Uterus (tissue), 4 donors: ENCODE measurements at regions of chr10 and their contacts with region 1.

Region 1: GRCh38 chr10:24435374-24435773 is 226.4 kb downstream of the KIAA1217 start:
- DNase-seq: no peak
- H3K4me3 ChIP-seq: no peak overlapping the region
- H3K27ac ChIP-seq: no peak overlapping the region
- H3K4me1 ChIP-seq: no peaks in the 10 kb centered on the region
- H3K27me3 ChIP-seq: no peaks in the 10 kb centered on the region
- CTCF ChIP-seq: no peak
- POLR2A ChIP-seq: no peak

Region 2: DNA sequence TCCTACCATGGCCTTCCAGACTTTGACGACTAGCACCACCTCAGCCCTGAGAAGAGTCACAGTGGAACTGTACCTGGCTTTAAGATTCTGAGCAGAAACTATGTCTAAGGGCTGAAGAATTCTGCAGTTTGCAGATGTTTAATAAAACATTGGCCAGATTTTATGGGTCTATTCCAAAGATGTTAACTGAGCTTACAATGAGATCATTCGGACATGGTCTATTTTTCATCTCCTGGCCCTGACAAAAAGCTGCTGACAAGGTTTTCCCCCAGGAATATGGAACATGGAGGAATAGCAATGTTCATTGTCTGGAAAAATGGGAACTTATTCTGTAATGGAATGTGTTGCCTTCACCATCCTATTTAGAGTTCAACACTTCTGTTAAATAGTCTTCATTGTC is 1176.9 kb before region 1 on chr10:
- intact Hi-C with region 1: loop called (anchors 5 kb)
- DNase-seq: no peak
- H3K4me3 ChIP-seq: no peak overlapping the region
- H3K27ac ChIP-seq: no peak overlapping the region
- H3K4me1 ChIP-seq: no peaks in the 10 kb centered on the region
- H3K27me3 ChIP-seq: no peaks in the 10 kb centered on the region
- CTCF ChIP-seq: no peak
- POLR2A ChIP-seq: no peak